MCF 10A (cell line): ENCODE measurements at regions of chr1 and their contacts with region 1.

Region 1: GRCh38 chr1:29033829-29034466 is 89.8 kb downstream of the TMEM200B start:
- DNase-seq: peak; percentile 55
- H3K4me3 Mint-ChIP-seq: no peak overlapping the region
- H3K27ac Mint-ChIP-seq: no peak overlapping the region
- H3K4me1 Mint-ChIP-seq: no peaks in the 10 kb centered on the region
- H3K27me3 Mint-ChIP-seq: no peaks in the 10 kb centered on the region
- CTCF ChIP-seq: peak; percentile 55

Region 2: GRCh38 chr1:28886731-28887418 is 147.1 kb before region 1 on chr1:
- CTCF ChIA-PET with region 1: interaction called, 311 read pairs
- POLR2A ChIA-PET with region 1: interaction called, 24 read pairs
- intact Hi-C with region 1: loop called (anchors 1 kb)
- DNase-seq: peak; percentile 90
- H3K4me3 Mint-ChIP-seq: peak overlapping the region; percentile 95
- H3K27ac Mint-ChIP-seq: peak overlapping the region; percentile 89
- H3K4me1 Mint-ChIP-seq: peaks cover 40% of the 10 kb centered on the region
- H3K27me3 Mint-ChIP-seq: no peaks in the 10 kb centered on the region
- CTCF ChIP-seq: no peak

Region 3: GRCh38 chr1:28914228-28915030 is 119.5 kb before region 1 on chr1 and contains the start of gene EPB41:
- CTCF ChIA-PET with region 1: interaction called, 5 read pairs
- POLR2A ChIA-PET with region 1: interaction called, 13 read pairs
- intact Hi-C with region 1: no loop called
- DNase-seq: peak; percentile 90
- H3K4me3 Mint-ChIP-seq: peak within 1 kb of the TSS; percentile 81
- H3K27ac Mint-ChIP-seq: peak within 1 kb of the TSS; percentile 79
- H3K4me1 Mint-ChIP-seq: peaks cover 6% of the 10 kb centered on the region
- H3K27me3 Mint-ChIP-seq: no peaks in the 10 kb centered on the region
- CTCF ChIP-seq: no peak
- total RNA-seq, gene EPB41: 15.0 and 23.0 TPM in 2 replicates

Region 4: DNA sequence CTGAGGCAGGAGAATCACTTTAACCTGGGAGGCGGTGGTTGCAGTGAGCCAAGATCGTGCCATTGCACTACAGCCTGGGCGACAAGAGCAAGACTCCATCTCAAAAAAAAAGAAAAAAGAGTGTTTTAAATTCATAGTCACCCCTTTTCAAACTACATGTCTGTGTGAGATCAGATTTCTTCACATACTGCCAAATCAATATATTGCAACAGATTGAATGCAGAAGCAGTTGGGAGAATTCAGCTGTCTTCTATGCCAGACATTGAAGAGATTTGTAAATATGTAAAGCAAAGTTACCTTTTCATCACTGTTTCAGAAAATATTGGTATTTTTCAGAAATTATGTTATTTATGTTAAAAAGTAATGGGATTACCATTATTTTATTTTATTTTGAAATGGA is 11.3 kb before region 1 on chr1:
- CTCF ChIA-PET with region 1: interaction called, 21 read pairs
- POLR2A ChIA-PET with region 1: interaction called, 4 read pairs
- intact Hi-C with region 1: no loop called
- DNase-seq: no peak
- H3K4me3 Mint-ChIP-seq: no peak overlapping the region
- H3K27ac Mint-ChIP-seq: no peak overlapping the region
- H3K4me1 Mint-ChIP-seq: no peaks in the 10 kb centered on the region
- H3K27me3 Mint-ChIP-seq: no peaks in the 10 kb centered on the region
- CTCF ChIP-seq: no peak

Region 5: GRCh38 chr1:29202584-29203340 is 168.8 kb after region 1 on chr1:
- CTCF ChIA-PET with region 1: interaction called, 14 read pairs
- POLR2A ChIA-PET with region 1: no interaction called
- intact Hi-C with region 1: loop called (anchors 1 kb)
- DNase-seq: peak; percentile 98
- H3K4me3 Mint-ChIP-seq: no peak overlapping the region
- H3K27ac Mint-ChIP-seq: peak overlapping the region; percentile 46
- H3K4me1 Mint-ChIP-seq: peaks cover 7% of the 10 kb centered on the region
- H3K27me3 Mint-ChIP-seq: no peaks in the 10 kb centered on the region
- CTCF ChIP-seq: peak; percentile 85